CD14-positive monocyte (primary cell): ENCODE measurements at regions of chr13 and their contacts with region 1.

Region 1: GRCh38 chr13:30802953-30803478 is 67.7 kb downstream of the ALOX5AP start:
- DNase-seq: peak; percentile 85 to 88 (median 87)
- H3K4me3 ChIP-seq: peak overlapping the region in 1 of 3 experiments; percentile 60
- H3K4me3 Mint-ChIP-seq: peak overlapping the region; percentile 70 to 87
- H3K27ac ChIP-seq: no peak overlapping the region
- H3K27ac Mint-ChIP-seq: peak overlapping the region in 6 of 7 donors; percentile 8 to 81 (median 62)
- H3K4me1 ChIP-seq: peaks cover 26 to 29% of the 10 kb centered on the region in 2 donors
- H3K4me1 Mint-ChIP-seq: peaks cover 32% of the 10 kb centered on the region
- H3K27me3 ChIP-seq: no peaks in the 10 kb centered on the region
- H3K27me3 Mint-ChIP-seq: peaks cover 3 to 11% (median 3%) of the 10 kb centered on the region in 3 donors
- CTCF ChIP-seq: peak; percentile 98

Region 2: DNA sequence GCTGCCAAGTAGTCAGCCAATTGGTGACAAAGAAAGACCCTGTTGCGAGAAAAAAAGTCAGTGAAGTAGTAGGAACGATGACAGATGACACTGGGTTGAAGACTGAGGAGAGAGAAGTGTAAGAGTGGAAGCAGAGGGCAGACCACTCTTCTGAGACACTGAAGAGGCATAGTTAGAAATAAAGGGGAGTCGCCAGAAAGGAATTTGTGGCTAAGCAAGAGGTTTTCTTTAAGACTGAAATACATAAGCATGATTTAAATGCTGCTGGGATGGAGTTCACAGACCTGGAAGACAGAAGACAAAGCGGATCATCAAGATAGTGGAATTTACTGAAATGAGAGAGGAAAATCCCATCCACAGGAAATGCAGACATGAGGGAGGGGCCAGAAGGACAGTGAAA is 241.5 kb before region 1 on chr13:
- intact Hi-C with region 1: no loop called
- DNase-seq: no peak
- H3K4me3 ChIP-seq: no peak overlapping the region
- H3K4me3 Mint-ChIP-seq: no peak overlapping the region
- H3K27ac ChIP-seq: no peak overlapping the region
- H3K27ac Mint-ChIP-seq: no peak overlapping the region
- H3K4me1 ChIP-seq: no peaks in the 10 kb centered on the region
- H3K4me1 Mint-ChIP-seq: no peaks in the 10 kb centered on the region
- H3K27me3 ChIP-seq: no peaks in the 10 kb centered on the region
- H3K27me3 Mint-ChIP-seq: peaks cover 0 to 2% (median 0%) of the 10 kb centered on the region in 3 donors
- CTCF ChIP-seq: no peak

Region 3: DNA sequence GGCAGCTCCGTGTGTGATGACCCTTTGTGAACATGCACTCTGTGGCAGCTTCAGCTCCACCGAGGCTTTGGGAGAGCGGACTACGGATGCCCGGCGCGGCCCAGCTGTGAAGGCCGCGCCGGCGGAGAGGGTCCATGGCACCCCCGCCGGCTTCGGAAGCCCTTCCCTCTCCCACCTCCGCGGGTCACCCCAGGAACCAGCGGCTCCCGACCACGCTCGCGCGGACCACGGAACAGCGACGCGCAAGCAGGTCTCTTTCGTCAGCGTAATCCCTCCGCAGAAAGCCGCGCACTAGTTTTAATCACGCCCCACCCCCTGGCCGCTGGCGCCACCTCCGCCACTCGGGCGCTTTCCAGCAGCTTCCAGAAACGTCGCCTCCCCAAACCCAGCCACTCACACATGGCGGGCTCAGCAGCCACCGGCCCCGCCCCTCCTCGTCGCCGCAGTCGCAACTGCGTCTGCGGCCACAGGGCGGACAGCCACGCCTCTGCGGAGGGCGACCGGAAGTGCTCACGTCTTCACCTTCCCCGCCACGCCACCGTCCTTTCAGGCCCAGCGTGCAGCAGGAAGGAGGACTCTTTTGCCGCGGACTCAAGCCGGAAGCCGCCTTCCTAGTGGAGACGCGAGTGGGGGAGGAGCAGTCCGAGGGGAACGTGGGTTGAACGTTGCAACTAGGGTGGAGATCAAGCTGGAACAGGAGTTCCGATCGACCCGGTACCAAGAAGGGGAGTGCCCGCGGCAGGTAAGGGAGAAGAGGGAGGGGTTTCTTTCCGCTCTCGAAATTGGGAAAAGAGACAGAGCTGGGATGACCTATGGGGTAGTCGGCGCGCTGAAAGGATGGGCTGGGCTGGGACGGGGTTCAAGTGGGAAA is 185.5 kb before region 1 on chr13 and contains the start of gene USPL1:
- intact Hi-C with region 1: loop called in 1 of 2 experiments (anchors 5 kb)
- DNase-seq: peak; percentile 97 to 99 (median 99)
- H3K4me3 ChIP-seq: peak within 1 kb of the TSS; percentile 95 to 100 (median 98)
- H3K4me3 Mint-ChIP-seq: no peak within 1 kb of the TSS
- H3K27ac ChIP-seq: peak within 1 kb of the TSS; percentile 100
- H3K27ac Mint-ChIP-seq: no peak within 1 kb of the TSS
- H3K4me1 ChIP-seq: peaks cover 28 to 34% of the 10 kb centered on the region in 2 donors
- H3K4me1 Mint-ChIP-seq: peaks cover 5% of the 10 kb centered on the region
- H3K27me3 ChIP-seq: no peaks in the 10 kb centered on the region
- H3K27me3 Mint-ChIP-seq: no peaks in the 10 kb centered on the region
- CTCF ChIP-seq: peak; percentile 19
- polyA plus RNA-seq, gene USPL1: 3.9 to 20.5 (median 5.5) TPM

Region 4: GRCh38 chr13:30659980-30660379 is 143.0 kb before region 1 on chr13:
- intact Hi-C with region 1: loop called in 1 of 2 experiments (anchors 5 kb)
- DNase-seq: no peak
- H3K4me3 ChIP-seq: peak overlapping the region in 1 of 3 experiments; percentile 25
- H3K4me3 Mint-ChIP-seq: peak overlapping the region in 1 of 2 donors; percentile 72
- H3K27ac ChIP-seq: peak overlapping the region; percentile 21 to 60
- H3K27ac Mint-ChIP-seq: peak overlapping the region in 4 of 7 donors; percentile 59 to 94 (median 72)
- H3K4me1 ChIP-seq: peaks cover 38 to 51% of the 10 kb centered on the region in 2 donors
- H3K4me1 Mint-ChIP-seq: peaks cover 23% of the 10 kb centered on the region
- H3K27me3 ChIP-seq: no peaks in the 10 kb centered on the region
- H3K27me3 Mint-ChIP-seq: no peaks in the 10 kb centered on the region
- CTCF ChIP-seq: no peak

Region 5: DNA sequence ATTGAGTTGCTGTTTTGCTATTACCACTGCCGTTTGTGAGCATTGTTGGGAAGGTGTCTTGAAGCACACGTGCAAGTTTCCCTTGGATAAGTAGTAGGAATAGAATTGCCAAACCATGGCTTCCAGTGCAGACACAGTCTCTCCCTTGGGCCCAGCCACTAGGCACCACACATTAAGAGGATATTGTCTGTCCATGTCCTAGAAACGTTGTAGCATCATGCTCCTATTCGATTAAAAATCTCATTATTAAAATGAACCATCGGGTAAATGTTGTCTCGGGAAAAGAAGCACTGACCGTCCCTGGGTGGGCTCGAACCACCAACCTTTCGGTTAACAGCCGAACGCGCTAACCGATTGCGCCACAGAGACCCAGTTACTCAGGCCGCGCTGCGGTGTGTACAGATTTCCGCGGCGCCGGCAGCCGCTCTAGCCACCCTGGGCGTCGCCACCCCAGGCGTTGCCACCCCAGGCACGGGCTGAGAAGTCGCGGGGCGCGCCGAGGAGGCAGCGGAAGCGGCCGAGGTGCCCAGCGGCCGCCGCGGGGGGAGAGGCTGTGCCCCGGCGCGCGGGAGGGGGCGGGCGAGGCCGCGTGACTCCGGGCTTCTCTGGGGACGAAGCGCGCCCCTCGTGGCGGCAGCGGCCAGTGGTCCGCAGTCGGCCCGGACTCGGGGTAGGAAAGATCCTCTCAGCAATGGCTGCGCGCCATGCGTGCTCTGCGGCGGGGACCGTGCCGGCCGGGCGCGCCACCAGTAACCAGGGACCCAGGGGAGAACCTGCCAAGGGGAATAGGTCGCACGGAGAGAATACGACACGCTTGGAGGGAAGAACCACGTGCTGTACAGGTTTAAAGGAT is 129.1 kb before region 1 on chr13:
- intact Hi-C with region 1: loop called (anchors 5 kb)
- DNase-seq: peak; percentile 96 to 98 (median 97)
- H3K4me3 ChIP-seq: peak overlapping the region; percentile 30 to 71 (median 46)
- H3K4me3 Mint-ChIP-seq: peak overlapping the region; percentile 89 to 95
- H3K27ac ChIP-seq: peak overlapping the region; percentile 14 to 65
- H3K27ac Mint-ChIP-seq: peak overlapping the region; percentile 66 to 91 (median 89)
- H3K4me1 ChIP-seq: peaks cover 18 to 20% of the 10 kb centered on the region in 2 donors
- H3K4me1 Mint-ChIP-seq: peaks cover 25% of the 10 kb centered on the region
- H3K27me3 ChIP-seq: no peaks in the 10 kb centered on the region
- H3K27me3 Mint-ChIP-seq: peaks cover 0 to 5% (median 2%) of the 10 kb centered on the region in 3 donors
- CTCF ChIP-seq: peak; percentile 78

Region 6: GRCh38 chr13:30679483-30680330 is 123.3 kb before region 1 on chr13:
- intact Hi-C with region 1: loop called (anchors 5 kb)
- DNase-seq: peak in 2 of 3 donors; percentile 42 to 47
- H3K4me3 ChIP-seq: no peak overlapping the region
- H3K4me3 Mint-ChIP-seq: peak overlapping the region; percentile 35 to 48
- H3K27ac ChIP-seq: no peak overlapping the region
- H3K27ac Mint-ChIP-seq: peak overlapping the region in 1 of 7 donors; percentile 6
- H3K4me1 ChIP-seq: peaks cover 28 to 31% of the 10 kb centered on the region in 2 donors
- H3K4me1 Mint-ChIP-seq: peaks cover 30% of the 10 kb centered on the region
- H3K27me3 ChIP-seq: peaks cover 0 to 2% of the 10 kb centered on the region in 2 donors
- H3K27me3 Mint-ChIP-seq: peaks cover 2 to 5% (median 2%) of the 10 kb centered on the region in 3 donors
- CTCF ChIP-seq: peak; percentile 75